ENCODE measurements at regions of chr2 and their contacts with region 1.

Region 1: DNA sequence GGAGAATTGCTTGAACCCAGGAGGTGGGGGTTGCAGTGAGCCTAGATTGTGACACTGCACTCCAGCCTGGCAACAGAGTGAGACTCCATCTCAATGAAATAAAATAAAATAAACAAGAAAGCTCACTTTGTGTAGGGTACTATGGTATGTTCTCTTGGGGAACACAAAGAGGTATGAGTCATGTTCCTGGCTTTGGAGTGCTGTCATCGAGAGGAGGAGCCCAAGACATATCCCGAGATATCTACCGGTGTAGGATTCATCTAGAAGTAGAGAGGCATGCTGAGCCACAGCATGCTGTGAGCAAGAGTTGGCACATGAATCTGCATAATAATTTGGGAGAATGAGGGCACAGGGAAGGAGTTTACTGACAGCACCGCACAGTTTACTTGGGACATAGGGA is 244.9 kb upstream of the EPHA4 start:
- DNase-seq: no peak

Region 2: GRCh38 chr2:221883976-221884375 is 66.9 kb after region 1 on chr2:
- intact Hi-C with region 1: loop called in 1 of 2 experiments (anchors 2 kb)
- DNase-seq: no peak

Measured in posterior vena cava (tissue), 2 donors.